GM12878 (cell line): ENCODE measurements at regions of chr9 and their contacts with region 1.

Region 1: DNA sequence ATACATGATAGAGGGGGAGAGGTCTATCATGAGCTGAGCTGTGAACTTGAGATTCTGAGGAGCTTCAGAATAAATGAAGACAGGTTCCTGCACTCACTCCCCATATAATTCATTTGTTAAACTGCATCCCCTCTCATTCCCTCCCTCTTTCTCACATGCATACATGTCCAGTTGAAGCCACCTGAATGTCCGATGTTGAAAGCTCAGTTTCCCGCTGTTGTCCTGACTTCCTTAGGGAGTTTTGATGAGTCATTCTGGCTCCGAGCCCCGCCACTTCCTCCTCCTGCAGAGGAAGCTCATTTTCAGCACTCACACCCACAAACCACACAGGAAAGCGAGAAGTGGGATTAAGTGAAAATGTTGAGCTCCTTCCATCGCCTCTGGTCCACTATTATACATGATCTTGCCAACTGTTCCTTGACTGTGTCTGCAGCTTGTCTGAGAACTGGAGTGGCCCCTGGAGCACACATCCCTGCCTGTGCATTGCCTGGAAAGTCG is 121.2 kb downstream of the CEMIP2 start:
- DNase-seq: peak; percentile 16
- ATAC-seq: peak; percentile 43; the same call in 2 of the 3 replicates
- H3K4me3 ChIP-seq: no peak overlapping the region
- H3K27ac ChIP-seq: no peak overlapping the region
- H3K4me1 ChIP-seq: no peaks in the 10 kb centered on the region; the same call in 1 of the 2 replicates
- H3K27me3 ChIP-seq: no peaks in the 10 kb centered on the region
- CTCF ChIP-seq: no peak
- EP300 ChIP-seq: no peak
- POLR2A ChIP-seq: no peak
- RAD21 ChIP-seq: no peak

Region 2: DNA sequence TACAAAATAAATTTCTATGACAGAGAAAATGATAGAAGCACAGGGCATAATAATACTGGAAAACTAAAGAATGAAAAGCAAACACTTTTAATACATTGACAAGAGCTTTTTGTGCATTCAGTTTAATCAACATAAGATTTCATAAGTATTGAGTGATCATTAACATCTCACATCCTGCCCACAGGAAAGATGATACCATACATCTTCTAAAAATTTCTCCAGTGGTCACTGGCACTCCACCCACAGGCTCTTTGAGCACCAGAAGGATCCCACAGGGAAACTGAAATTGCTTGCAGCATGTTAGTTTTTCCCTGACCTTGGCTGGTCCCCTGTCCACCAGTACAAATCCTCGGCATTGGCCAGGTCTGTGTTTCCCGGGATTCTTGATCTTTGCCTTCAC is 64.8 kb before region 1 on chr9:
- CTCF ChIA-PET with region 1: no interaction called
- POLR2A ChIA-PET with region 1: no interaction called
- RAD21 ChIA-PET with region 1: no interaction called
- SMC1A ChIA-PET with region 1: no interaction called
- in situ Hi-C with region 1: no loop called
- intact Hi-C with region 1: no loop called
- DNase-seq: no peak
- ATAC-seq: no peak
- H3K4me3 ChIP-seq: no peak overlapping the region
- H3K27ac ChIP-seq: no peak overlapping the region
- H3K4me1 ChIP-seq: no peaks in the 10 kb centered on the region
- H3K27me3 ChIP-seq: no peaks in the 10 kb centered on the region; a peak in 1 of 4 replicates
- CTCF ChIP-seq: no peak
- EP300 ChIP-seq: no peak
- POLR2A ChIP-seq: no peak
- RAD21 ChIP-seq: no peak

Region 3: GRCh38 chr9:71663931-71664459 is 16.9 kb after region 1 on chr9:
- CTCF ChIA-PET with region 1: no interaction called
- POLR2A ChIA-PET with region 1: interaction called, 4 read pairs
- RAD21 ChIA-PET with region 1: no interaction called
- SMC1A ChIA-PET with region 1: interaction called, 3 read pairs
- in situ Hi-C with region 1: no loop called
- intact Hi-C with region 1: loop called (anchors 2 kb)
- DNase-seq: no peak
- ATAC-seq: no peak
- H3K4me3 ChIP-seq: no peak overlapping the region
- H3K27ac ChIP-seq: no peak overlapping the region
- H3K4me1 ChIP-seq: no peaks in the 10 kb centered on the region
- H3K27me3 ChIP-seq: no peaks in the 10 kb centered on the region
- CTCF ChIP-seq: no peak
- EP300 ChIP-seq: no peak
- POLR2A ChIP-seq: no peak
- RAD21 ChIP-seq: no peak

Region 4: GRCh38 chr9:71683598-71684235 is 36.6 kb after region 1 on chr9:
- CTCF ChIA-PET with region 1: interaction called, 4 read pairs
- POLR2A ChIA-PET with region 1: interaction called, 10 read pairs
- RAD21 ChIA-PET with region 1: interaction called, 3 read pairs
- SMC1A ChIA-PET with region 1: interaction called, 7 read pairs
- in situ Hi-C with region 1: no loop called
- intact Hi-C with region 1: no loop called
- DNase-seq: no peak
- ATAC-seq: no peak
- H3K4me3 ChIP-seq: no peak overlapping the region
- H3K27ac ChIP-seq: no peak overlapping the region
- H3K4me1 ChIP-seq: no peaks in the 10 kb centered on the region
- H3K27me3 ChIP-seq: no peaks in the 10 kb centered on the region
- CTCF ChIP-seq: no peak
- EP300 ChIP-seq: no peak
- POLR2A ChIP-seq: no peak
- RAD21 ChIP-seq: no peak

Region 5: DNA sequence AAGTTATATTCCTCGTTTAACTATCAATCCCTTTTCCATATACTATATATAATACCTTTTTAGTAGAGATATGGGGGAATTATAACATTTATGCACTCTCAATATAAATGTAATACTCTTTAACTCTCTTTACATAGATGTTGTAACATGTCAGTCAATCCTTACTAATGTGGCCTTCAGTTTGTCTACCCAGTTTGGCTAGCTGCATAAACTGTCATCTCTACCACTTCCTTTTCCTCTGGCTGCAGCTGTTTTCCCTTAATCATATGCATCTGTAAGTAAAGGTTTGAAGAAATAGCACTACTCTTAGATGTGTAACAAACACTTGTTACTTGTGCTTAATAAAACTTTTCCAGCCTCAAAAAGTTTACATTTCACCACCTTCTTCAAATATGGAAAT is 250.4 kb after region 1 on chr9:
- CTCF ChIA-PET with region 1: no interaction called
- POLR2A ChIA-PET with region 1: no interaction called
- RAD21 ChIA-PET with region 1: no interaction called
- SMC1A ChIA-PET with region 1: no interaction called
- in situ Hi-C with region 1: no loop called
- intact Hi-C with region 1: no loop called
- DNase-seq: no peak
- ATAC-seq: peak; percentile 52
- H3K4me3 ChIP-seq: no peak overlapping the region
- H3K27ac ChIP-seq: no peak overlapping the region
- H3K4me1 ChIP-seq: peaks cover 49% of the 10 kb centered on the region
- H3K27me3 ChIP-seq: no peaks in the 10 kb centered on the region
- CTCF ChIP-seq: no peak
- EP300 ChIP-seq: no peak
- POLR2A ChIP-seq: no peak
- RAD21 ChIP-seq: no peak